Caco-2 (cell line): ENCODE measurements at regions of chr15 and their contacts with region 1.

Region 1: GRCh38 chr15:55649054-55649423 is 60.9 kb upstream of the PYGO1 start:
- DNase-seq: no peak
- H3K4me3 ChIP-seq: no peak overlapping the region
- H3K4me3 Mint-ChIP-seq: no peak overlapping the region
- H3K27ac Mint-ChIP-seq: no peak overlapping the region
- H3K4me1 ChIP-seq: no peaks in the 10 kb centered on the region
- H3K4me1 Mint-ChIP-seq: peaks cover 6% of the 10 kb centered on the region
- H3K27me3 ChIP-seq: no peaks in the 10 kb centered on the region
- H3K27me3 Mint-ChIP-seq: no peaks in the 10 kb centered on the region
- CTCF ChIP-seq: no peak

Region 2: GRCh38 chr15:55221090-55222011 is 427.7 kb before region 1 on chr15:
- CTCF ChIA-PET with region 1: no interaction called
- POLR2A ChIA-PET with region 1: no interaction called
- intact Hi-C with region 1: loop called (anchors 5 kb)
- DNase-seq: peak in 1 of 2 experiments; percentile 49
- H3K4me3 ChIP-seq: no peak overlapping the region
- H3K4me3 Mint-ChIP-seq: peak overlapping the region; percentile 1
- H3K27ac Mint-ChIP-seq: peak overlapping the region; percentile 55
- H3K4me1 ChIP-seq: peaks cover 19% of the 10 kb centered on the region
- H3K4me1 Mint-ChIP-seq: peaks cover 14% of the 10 kb centered on the region
- H3K27me3 ChIP-seq: no peaks in the 10 kb centered on the region
- H3K27me3 Mint-ChIP-seq: no peaks in the 10 kb centered on the region
- CTCF ChIP-seq: no peak

Region 3: GRCh38 chr15:55587321-55588069 is 61.5 kb before region 1 on chr15:
- CTCF ChIA-PET with region 1: no interaction called
- POLR2A ChIA-PET with region 1: no interaction called
- intact Hi-C with region 1: no loop called
- DNase-seq: peak; percentile 50 to 64
- H3K4me3 ChIP-seq: peak overlapping the region; percentile 67
- H3K4me3 Mint-ChIP-seq: no peak overlapping the region
- H3K27ac Mint-ChIP-seq: peak overlapping the region; percentile 43
- H3K4me1 ChIP-seq: no peaks in the 10 kb centered on the region
- H3K4me1 Mint-ChIP-seq: peaks cover 11% of the 10 kb centered on the region
- H3K27me3 ChIP-seq: no peaks in the 10 kb centered on the region
- H3K27me3 Mint-ChIP-seq: peaks cover 7% of the 10 kb centered on the region
- CTCF ChIP-seq: no peak

Region 4: DNA sequence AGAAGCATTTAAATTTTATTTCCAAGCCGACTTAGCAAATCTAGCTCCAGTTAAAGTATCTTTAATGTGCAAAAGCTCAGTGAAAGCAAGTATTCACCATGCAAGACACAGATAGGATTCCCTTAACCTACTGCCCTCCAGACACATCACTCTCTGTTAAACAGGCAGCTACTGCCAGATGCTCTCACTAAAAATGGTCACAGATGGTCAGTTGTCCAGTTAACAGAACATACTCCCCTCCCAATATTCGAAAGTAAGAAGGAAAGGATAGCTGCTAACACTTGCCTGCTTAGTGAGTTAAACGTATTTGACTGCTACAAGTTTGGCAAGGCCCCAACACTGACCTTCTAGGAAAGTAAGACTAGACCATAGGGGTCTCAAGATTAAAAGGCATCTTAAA is 20.2 kb after region 1 on chr15:
- CTCF ChIA-PET with region 1: no interaction called
- POLR2A ChIA-PET with region 1: no interaction called
- intact Hi-C with region 1: no loop called
- DNase-seq: no peak
- H3K4me3 ChIP-seq: no peak overlapping the region
- H3K4me3 Mint-ChIP-seq: no peak overlapping the region
- H3K27ac Mint-ChIP-seq: no peak overlapping the region
- H3K4me1 ChIP-seq: 0 out of 2 replicates have a peak, but pooled peaks cover 3% of the 10 kb centered on the region
- H3K4me1 Mint-ChIP-seq: no peaks in the 10 kb centered on the region
- H3K27me3 ChIP-seq: no peaks in the 10 kb centered on the region
- H3K27me3 Mint-ChIP-seq: no peaks in the 10 kb centered on the region
- CTCF ChIP-seq: no peak

Region 5: GRCh38 chr15:55679873-55680272 is 30.8 kb after region 1 on chr15:
- CTCF ChIA-PET with region 1: no interaction called
- POLR2A ChIA-PET with region 1: no interaction called
- intact Hi-C with region 1: no loop called
- DNase-seq: no peak
- H3K4me3 ChIP-seq: no peak overlapping the region
- H3K4me3 Mint-ChIP-seq: no peak overlapping the region
- H3K27ac Mint-ChIP-seq: no peak overlapping the region
- H3K4me1 ChIP-seq: 0 out of 2 replicates have a peak, but pooled peaks cover 4% of the 10 kb centered on the region
- H3K4me1 Mint-ChIP-seq: no peaks in the 10 kb centered on the region
- H3K27me3 ChIP-seq: no peaks in the 10 kb centered on the region
- H3K27me3 Mint-ChIP-seq: no peaks in the 10 kb centered on the region
- CTCF ChIP-seq: no peak

Region 6: GRCh38 chr15:55742927-55743728 is 94.1 kb after region 1 on chr15 and contains the start of gene PRTG:
- CTCF ChIA-PET with region 1: no interaction called
- POLR2A ChIA-PET with region 1: no interaction called
- intact Hi-C with region 1: loop called (anchors 2 kb)
- DNase-seq: peak; percentile 91 to 92
- H3K4me3 ChIP-seq: peak within 1 kb of the TSS; percentile 90
- H3K4me3 Mint-ChIP-seq: no peak within 1 kb of the TSS
- H3K27ac Mint-ChIP-seq: peak within 1 kb of the TSS; percentile 20
- H3K4me1 ChIP-seq: peaks cover 42% of the 10 kb centered on the region
- H3K4me1 Mint-ChIP-seq: peaks cover 7% of the 10 kb centered on the region
- H3K27me3 ChIP-seq: no peaks in the 10 kb centered on the region
- H3K27me3 Mint-ChIP-seq: no peaks in the 10 kb centered on the region
- CTCF ChIP-seq: no peak
- total RNA-seq, gene PRTG: 39.1 and 40.2 TPM in 2 replicates

Region 7: GRCh38 chr15:55774933-55775295 is 125.9 kb after region 1 on chr15:
- CTCF ChIA-PET with region 1: interaction called, 4 read pairs
- POLR2A ChIA-PET with region 1: no interaction called
- intact Hi-C with region 1: loop called (anchors 1 kb)
- DNase-seq: no peak
- H3K4me3 ChIP-seq: no peak overlapping the region
- H3K4me3 Mint-ChIP-seq: no peak overlapping the region
- H3K27ac Mint-ChIP-seq: no peak overlapping the region
- H3K4me1 ChIP-seq: no peaks in the 10 kb centered on the region
- H3K4me1 Mint-ChIP-seq: no peaks in the 10 kb centered on the region
- H3K27me3 ChIP-seq: no peaks in the 10 kb centered on the region
- H3K27me3 Mint-ChIP-seq: peaks cover 3% of the 10 kb centered on the region
- CTCF ChIP-seq: no peak

Region 8: DNA sequence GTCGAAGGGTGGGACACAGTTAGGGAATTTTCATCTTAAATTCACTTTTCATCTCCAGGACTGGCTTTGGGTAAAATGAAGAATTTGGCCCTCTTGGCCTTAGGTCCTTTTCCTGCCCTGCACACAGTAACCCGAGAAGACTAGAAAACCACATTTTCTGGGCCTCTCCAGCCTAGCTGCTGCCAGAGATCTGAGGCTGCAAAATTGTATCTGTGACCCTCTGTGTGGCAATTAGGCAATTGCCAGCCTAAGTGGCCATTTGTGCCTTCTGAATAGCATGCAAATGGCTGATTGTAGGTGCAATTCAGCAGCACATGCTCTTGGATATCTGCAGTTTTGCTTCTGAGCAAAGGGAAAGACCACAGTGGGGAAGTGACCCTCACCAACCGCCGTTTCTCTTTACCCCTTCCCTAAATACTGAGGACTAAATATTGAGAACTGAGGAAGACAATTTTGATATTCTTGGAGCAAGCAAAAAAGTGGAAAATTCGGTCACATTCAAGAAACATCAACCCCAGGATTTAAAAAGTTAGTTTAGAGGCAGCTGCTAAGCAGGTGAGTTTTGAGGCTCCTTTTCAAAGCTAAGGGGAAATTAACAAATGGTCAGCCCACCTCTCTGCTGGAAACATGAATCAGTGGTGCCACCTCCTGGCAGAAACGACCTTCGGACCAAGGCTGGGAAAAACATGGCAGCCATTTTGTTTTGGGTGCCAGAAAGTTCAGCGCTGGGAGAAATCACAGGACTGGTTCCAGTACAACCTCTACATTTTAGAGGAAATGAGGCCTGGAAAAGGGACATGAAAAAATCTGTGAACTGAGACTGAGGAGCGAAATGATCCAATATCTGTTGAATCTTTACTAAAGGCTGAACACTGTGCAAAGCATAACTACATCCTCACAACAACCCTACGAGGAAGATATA is 150.5 kb after region 1 on chr15:
- CTCF ChIA-PET with region 1: no interaction called
- POLR2A ChIA-PET with region 1: no interaction called
- intact Hi-C with region 1: loop called (anchors 1 kb)
- DNase-seq: peak; percentile 68 to 76
- H3K4me3 ChIP-seq: no peak overlapping the region
- H3K4me3 Mint-ChIP-seq: no peak overlapping the region
- H3K27ac Mint-ChIP-seq: peak overlapping the region; percentile 40
- H3K4me1 ChIP-seq: no peaks in the 10 kb centered on the region
- H3K4me1 Mint-ChIP-seq: no peaks in the 10 kb centered on the region
- H3K27me3 ChIP-seq: no peaks in the 10 kb centered on the region
- H3K27me3 Mint-ChIP-seq: no peaks in the 10 kb centered on the region
- CTCF ChIP-seq: peak; percentile 67 to 73

Region 9: DNA sequence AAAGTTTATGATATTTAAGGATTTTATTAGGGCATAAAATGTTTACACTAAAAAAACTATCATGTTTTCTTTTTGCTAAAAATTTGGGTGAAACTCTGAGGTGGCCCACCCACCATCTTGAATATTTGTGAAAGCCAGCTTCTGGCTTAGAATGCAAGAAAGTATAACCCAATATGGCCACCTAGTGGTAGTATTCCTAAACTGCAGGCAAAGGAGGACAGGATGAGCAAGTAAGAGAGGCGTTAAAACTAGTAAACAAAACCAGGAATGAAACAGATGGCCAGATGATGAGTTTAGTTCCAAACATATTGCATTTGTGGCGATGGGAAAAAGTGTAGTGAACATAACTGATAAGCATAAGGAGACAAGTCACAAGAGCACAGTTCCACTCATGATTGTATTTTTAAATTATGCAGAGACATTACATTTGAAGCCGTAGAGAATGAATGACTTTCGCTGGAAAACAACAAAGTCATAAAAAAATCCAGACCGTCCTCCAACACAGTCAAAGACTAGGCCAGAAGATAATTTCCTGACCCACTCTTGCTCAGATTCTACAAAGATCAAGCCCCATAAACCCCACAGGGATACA is 197.2 kb after region 1 on chr15:
- CTCF ChIA-PET with region 1: interaction called, 5 read pairs
- POLR2A ChIA-PET with region 1: no interaction called
- intact Hi-C with region 1: loop called (anchors 1 kb)
- DNase-seq: peak; percentile 59 to 77
- H3K4me3 ChIP-seq: no peak overlapping the region
- H3K4me3 Mint-ChIP-seq: no peak overlapping the region
- H3K27ac Mint-ChIP-seq: no peak overlapping the region
- H3K4me1 ChIP-seq: no peaks in the 10 kb centered on the region
- H3K4me1 Mint-ChIP-seq: no peaks in the 10 kb centered on the region
- H3K27me3 ChIP-seq: no peaks in the 10 kb centered on the region
- H3K27me3 Mint-ChIP-seq: no peaks in the 10 kb centered on the region
- CTCF ChIP-seq: peak; percentile 74 to 76